ENCODE measurements at regions of chr16 and their contacts with region 1.

Region 1: GRCh38 chr16:68264128-68265077 is at the start of gene SLC7A6:
- DNase-seq: peak; percentile 84
- H3K4me3 ChIP-seq: peak within 1 kb of the TSS; percentile 75
- H3K27ac ChIP-seq: peak within 1 kb of the TSS; percentile 80
- H3K4me1 ChIP-seq: peaks cover 59% of the 10 kb centered on the region
- CTCF ChIP-seq: peak; percentile 90
- total RNA-seq, gene SLC7A6: 50.9 and 53.1 TPM in 2 replicates

Region 2: GRCh38 chr16:68128577-68129305 is 135.7 kb before region 1 on chr16:
- CTCF ChIA-PET with region 1: no interaction called
- POLR2A ChIA-PET with region 1: no interaction called
- intact Hi-C with region 1: no loop called
- DNase-seq: no peak
- H3K4me3 ChIP-seq: no peak overlapping the region
- H3K27ac ChIP-seq: no peak overlapping the region
- H3K4me1 ChIP-seq: peaks cover 18% of the 10 kb centered on the region
- CTCF ChIP-seq: no peak

Region 3: DNA sequence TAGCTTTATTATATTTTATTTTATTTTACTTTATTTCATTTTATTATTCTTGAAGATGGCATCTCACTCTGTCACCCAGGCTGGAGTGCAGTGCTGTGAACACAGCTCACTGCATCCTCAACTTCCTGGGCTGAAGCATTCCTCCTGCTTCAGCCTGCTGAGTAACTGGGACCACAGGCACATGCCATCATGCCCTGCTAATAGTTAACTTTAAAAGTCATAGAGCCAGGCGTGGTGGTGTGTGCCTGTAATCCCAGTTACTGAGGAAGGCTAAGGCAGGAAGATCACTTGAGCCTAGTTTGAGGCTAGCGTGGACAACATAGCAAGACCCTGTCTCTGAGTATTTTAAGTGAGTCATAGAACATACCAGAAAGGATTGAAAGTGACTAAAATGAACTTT is 67.2 kb before region 1 on chr16:
- CTCF ChIA-PET with region 1: no interaction called
- POLR2A ChIA-PET with region 1: no interaction called
- intact Hi-C with region 1: no loop called
- DNase-seq: no peak
- H3K4me3 ChIP-seq: no peak overlapping the region
- H3K27ac ChIP-seq: no peak overlapping the region
- H3K4me1 ChIP-seq: no peaks in the 10 kb centered on the region
- CTCF ChIP-seq: no peak

Region 4: GRCh38 chr16:68244903-68245853 is 19.2 kb before region 1 on chr16 and contains the start of gene PLA2G15:
- CTCF ChIA-PET with region 1: no interaction called
- POLR2A ChIA-PET with region 1: interaction called, 3 read pairs
- intact Hi-C with region 1: loop called (anchors 1 kb)
- DNase-seq: peak; percentile 94
- H3K4me3 ChIP-seq: peak within 1 kb of the TSS; percentile 80
- H3K27ac ChIP-seq: peak within 1 kb of the TSS; percentile 2
- H3K4me1 ChIP-seq: peaks cover 34% of the 10 kb centered on the region
- CTCF ChIP-seq: no peak
- total RNA-seq, gene PLA2G15: 38.9 and 46.2 TPM in 2 replicates

Region 5: GRCh38 chr16:68275611-68276191 is 11.3 kb after region 1 on chr16:
- CTCF ChIA-PET with region 1: interaction called, 13 read pairs
- POLR2A ChIA-PET with region 1: interaction called, 8 read pairs
- intact Hi-C with region 1: no loop called
- DNase-seq: peak; percentile 71
- H3K4me3 ChIP-seq: peak overlapping the region; percentile 9
- H3K27ac ChIP-seq: peak overlapping the region; percentile 79
- H3K4me1 ChIP-seq: peaks cover 73% of the 10 kb centered on the region
- CTCF ChIP-seq: no peak

Region 6: GRCh38 chr16:68283801-68284598 is 19.6 kb after region 1 on chr16:
- CTCF ChIA-PET with region 1: interaction called, 15 read pairs
- POLR2A ChIA-PET with region 1: interaction called, 8 read pairs
- intact Hi-C with region 1: loop called (anchors 1 kb)
- DNase-seq: peak; percentile 65
- H3K4me3 ChIP-seq: peak overlapping the region; percentile 58
- H3K27ac ChIP-seq: peak overlapping the region; percentile 97
- H3K4me1 ChIP-seq: peaks cover 99% of the 10 kb centered on the region
- CTCF ChIP-seq: no peak

Region 7: GRCh38 chr16:68289621-68290329 is 25.4 kb after region 1 on chr16:
- CTCF ChIA-PET with region 1: interaction called, 15 read pairs
- POLR2A ChIA-PET with region 1: interaction called, 7 read pairs
- intact Hi-C with region 1: loop called (anchors 1 kb)
- DNase-seq: peak; percentile 80
- H3K4me3 ChIP-seq: no peak overlapping the region
- H3K27ac ChIP-seq: peak overlapping the region; percentile 66
- H3K4me1 ChIP-seq: peaks cover 72% of the 10 kb centered on the region
- CTCF ChIP-seq: no peak

Region 8: GRCh38 chr16:68310761-68311511 is 46.5 kb after region 1 on chr16 and contains the starts of genes PRMT7 and SLC7A6OS:
- CTCF ChIA-PET with region 1: interaction called, 5 read pairs
- POLR2A ChIA-PET with region 1: interaction called, 13 read pairs
- intact Hi-C with region 1: loop called (anchors 1 kb)
- DNase-seq: peak; percentile 95
- H3K4me3 ChIP-seq: peak within 1 kb of the TSS; percentile 94
- H3K27ac ChIP-seq: peak within 1 kb of the TSS; percentile 66
- H3K4me1 ChIP-seq: peaks cover 28% of the 10 kb centered on the region
- CTCF ChIP-seq: no peak
- total RNA-seq, gene PRMT7: 75.3 and 85.1 TPM in 2 replicates
- total RNA-seq, gene SLC7A6OS: 28.6 and 35.2 TPM in 2 replicates

Region 9: DNA sequence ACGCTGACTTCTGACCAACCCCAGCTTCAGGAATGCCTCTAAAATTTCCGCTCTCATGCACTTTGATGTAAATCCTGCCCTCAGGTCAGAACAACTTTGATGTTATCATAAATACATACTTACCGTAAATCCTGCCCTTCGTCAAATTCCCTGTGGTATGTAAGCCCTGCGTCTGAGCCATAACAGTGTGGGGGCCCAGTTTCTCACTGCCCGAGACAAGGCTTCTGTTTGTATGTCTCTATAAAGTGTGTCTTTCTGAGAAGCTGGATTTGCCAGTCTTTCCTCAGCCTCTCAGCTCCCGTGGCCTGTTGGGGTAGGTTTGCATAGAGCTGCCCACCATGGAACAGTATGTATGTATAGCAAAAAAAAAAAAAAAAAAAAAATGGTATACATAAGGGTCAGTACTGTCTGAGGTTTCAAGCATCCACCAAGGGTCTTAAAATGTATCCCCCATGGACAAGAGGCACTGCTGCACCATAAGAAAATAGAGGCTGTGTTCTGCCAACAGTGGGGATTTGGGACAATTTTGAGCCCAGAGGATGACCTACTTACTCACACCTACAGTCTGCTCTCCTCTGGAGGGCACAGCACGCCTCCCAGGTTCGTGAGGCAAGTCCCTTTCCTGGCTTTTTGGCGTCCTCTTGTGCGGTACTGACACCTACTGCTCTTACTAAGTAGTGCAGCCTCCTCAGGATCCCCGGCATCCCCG is 63.9 kb after region 1 on chr16:
- CTCF ChIA-PET with region 1: interaction called, 17 read pairs
- POLR2A ChIA-PET with region 1: interaction called, 7 read pairs
- intact Hi-C with region 1: loop called (anchors 1 kb)
- DNase-seq: peak; percentile 91
- H3K4me3 ChIP-seq: no peak overlapping the region
- H3K27ac ChIP-seq: no peak overlapping the region
- H3K4me1 ChIP-seq: peaks cover 28% of the 10 kb centered on the region
- CTCF ChIP-seq: peak; percentile 96

Measured in OCI-LY7 (cell line).